Adrenal gland (tissue), 19 donors: ENCODE measurements at regions of chr17 and their contacts with region 1.

Region 1: DNA sequence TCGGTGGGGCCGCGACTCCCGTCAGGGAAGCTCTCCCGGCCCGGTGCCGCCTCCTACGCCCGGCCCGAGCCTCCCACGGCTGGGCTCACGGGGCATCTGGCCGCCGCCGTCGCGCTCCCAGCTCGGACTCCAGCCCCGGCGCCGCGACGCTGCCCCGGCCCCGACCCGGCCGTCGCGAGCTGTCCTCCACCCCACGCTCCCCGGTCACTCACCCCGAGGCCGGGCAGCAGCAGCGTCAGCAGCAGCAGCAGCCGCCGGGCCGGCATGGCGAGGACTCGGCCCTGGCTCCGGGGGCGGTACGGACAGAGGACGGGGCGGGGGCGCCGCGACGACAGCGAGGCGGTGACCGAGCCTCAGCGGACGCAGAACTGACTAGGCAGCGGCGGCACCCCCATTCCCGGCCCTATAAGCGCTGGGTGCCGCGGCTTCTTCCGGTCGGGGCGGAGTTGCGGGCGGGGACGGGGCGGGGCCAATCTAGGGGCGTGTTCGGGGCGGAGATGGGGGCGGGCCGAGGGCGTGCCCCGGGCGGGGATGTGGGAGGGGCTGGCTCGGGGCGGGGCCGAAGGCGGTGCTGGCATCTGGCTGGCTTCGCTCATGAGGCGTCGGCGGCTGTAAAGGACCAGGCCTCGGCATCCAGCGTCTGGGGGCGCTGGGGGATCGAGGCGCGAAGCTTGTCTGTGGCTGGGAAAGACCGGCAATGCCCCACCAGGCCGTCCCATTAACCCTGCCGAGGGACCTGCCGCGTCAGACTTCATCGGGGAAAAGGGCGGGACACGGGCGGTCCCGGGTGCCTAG is at the start of gene ERN1:
- DNase-seq: peak; percentile 94 to 97 (median 96)
- H3K4me3 ChIP-seq: peak within 1 kb of the TSS; percentile 43 to 97 (median 74)
- H3K27ac ChIP-seq: peak within 1 kb of the TSS; percentile 79 to 98 (median 91)
- H3K4me1 ChIP-seq: peaks cover 38 to 59% of the 10 kb centered on the region in 2 donors
- H3K27me3 ChIP-seq: no peaks in the 10 kb centered on the region
- CTCF ChIP-seq: no peak
- POLR2A ChIP-seq: peak; percentile 92 to 99
- total RNA-seq, gene ERN1: 40.4 to 205 (median 111) TPM

Region 2: DNA sequence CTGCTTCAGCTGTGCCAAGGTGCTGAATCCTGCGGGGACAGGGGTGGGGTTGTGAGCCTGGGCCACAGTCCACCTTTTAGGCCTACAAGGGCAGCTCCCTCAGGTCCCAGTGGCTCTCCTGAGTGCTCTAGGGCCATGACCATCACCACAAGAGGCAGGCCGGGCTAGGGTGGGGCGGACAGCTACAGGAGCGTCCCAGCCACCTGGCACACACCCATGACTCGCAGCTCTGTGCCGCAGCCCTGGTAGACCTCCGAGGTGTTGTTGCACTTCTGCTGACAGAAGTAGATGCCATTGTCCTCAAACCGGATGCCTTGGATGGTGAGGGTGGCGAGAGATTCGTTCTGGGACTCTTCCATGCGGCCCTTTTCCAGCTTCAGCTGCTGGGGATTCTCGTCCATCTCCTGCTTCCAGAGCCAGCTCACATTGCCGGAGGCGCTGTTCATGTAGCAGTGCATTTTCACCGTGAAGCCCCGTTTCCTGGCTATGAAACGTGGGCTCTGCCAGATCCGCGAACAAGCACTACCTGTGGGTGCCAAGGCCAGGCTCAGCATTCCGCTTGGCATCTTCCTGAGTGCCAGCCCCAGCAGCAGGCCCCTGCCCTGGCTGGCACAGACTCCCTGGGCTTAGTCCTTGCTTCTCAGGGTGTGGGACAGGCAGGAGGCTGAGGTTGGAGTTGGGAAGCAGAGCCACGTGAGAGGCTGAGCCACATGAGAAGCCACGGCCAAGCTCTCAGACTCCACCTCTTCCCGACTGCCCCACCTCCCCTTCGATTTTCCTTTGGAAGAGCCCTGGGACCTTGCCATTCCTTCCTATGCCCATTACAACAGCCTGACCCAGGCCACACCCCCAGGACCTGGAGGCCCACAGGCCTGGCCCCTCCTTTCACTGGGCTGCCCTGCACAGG is 199.8 kb before region 1 on chr17:
- intact Hi-C with region 1: loop called in 1 of 2 experiments (anchors 10 kb)
- DNase-seq: peak in 1 of 7 donors; percentile 27
- H3K4me3 ChIP-seq: no peak overlapping the region
- H3K27ac ChIP-seq: peak overlapping the region in 1 of 5 donors; percentile 66
- H3K4me1 ChIP-seq: no peaks in the 10 kb centered on the region
- H3K27me3 ChIP-seq: no peaks in the 10 kb centered on the region
- CTCF ChIP-seq: no peak
- POLR2A ChIP-seq: no peak

Region 3: DNA sequence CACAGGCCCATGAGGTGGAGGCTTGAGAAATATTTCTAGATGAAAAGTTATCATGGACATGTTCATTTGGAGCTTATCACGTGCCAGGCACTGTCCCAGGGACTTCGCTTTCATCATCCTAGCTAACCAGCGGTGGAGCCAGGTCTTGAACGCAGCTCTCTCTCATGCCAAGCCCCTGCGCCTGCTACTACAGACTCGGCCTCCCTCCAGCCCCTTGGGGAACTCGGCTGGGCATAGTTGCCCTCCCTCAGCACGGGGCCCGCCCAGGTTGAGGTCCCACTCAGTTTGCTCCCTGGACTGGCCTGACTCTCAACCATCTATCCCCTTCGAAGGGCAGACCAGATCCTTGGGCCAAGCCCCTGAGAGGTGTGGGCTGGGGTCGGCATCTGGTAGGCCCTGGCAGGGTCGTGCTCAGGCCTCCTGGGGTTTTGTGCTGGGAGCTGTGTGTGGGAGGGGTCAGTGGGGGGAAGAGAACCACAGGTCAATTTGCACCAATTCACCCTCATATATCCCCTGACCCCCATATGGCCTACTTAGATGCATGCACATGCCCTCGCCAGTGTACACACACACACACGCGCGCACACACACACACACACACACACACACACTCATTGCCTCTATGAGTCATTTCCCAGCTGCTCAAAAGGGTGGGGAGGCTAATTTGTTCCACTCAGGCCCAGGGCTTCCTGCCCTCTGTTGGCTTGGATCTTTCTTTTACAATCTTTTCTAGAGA is 145.1 kb before region 1 on chr17:
- intact Hi-C with region 1: no loop called
- DNase-seq: peak; percentile 72 to 92 (median 78)
- H3K4me3 ChIP-seq: no peak overlapping the region
- H3K27ac ChIP-seq: peak overlapping the region in 2 of 5 donors; percentile 59 to 72
- H3K4me1 ChIP-seq: peaks cover 5 to 23% of the 10 kb centered on the region in 2 donors
- H3K27me3 ChIP-seq: no peaks in the 10 kb centered on the region
- CTCF ChIP-seq: no peak
- POLR2A ChIP-seq: no peak

Region 4: DNA sequence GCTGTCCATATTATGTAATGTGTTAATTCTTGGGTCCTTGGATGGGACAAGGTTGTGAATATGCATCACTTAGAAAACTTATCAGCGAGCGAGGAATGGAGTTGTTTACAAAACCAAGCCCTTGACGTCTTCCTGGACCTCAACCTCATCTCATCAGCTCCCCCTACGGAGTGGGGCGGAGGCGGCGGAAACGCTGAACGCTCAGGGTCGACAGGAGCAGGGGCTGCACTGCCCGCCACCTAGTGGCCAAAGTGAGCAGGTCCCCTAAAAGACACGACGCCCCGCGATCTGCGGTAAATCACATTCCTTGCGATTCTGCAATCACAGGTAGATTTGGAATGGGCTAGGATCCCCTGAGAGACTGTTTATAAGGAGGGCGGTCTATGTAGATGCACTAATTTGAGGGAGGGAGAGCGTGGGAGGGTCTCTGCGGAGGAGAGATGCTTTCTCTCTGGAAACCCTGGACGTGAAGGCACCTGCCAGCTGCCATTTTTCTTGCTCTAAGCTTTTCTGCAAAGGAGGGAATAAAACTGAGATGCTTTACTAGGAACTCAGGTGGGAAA is 104.1 kb before region 1 on chr17:
- intact Hi-C with region 1: loop called (anchors 5 to 10 kb)
- DNase-seq: peak; percentile 76 to 88 (median 87)
- H3K4me3 ChIP-seq: peak overlapping the region in 1 of 4 donors; percentile 35
- H3K27ac ChIP-seq: peak overlapping the region in 3 of 5 donors; percentile 28 to 56 (median 39)
- H3K4me1 ChIP-seq: peaks cover 0 to 10% of the 10 kb centered on the region in 2 donors
- H3K27me3 ChIP-seq: no peaks in the 10 kb centered on the region
- CTCF ChIP-seq: peak; percentile 88 to 97 (median 93)
- POLR2A ChIP-seq: no peak

Region 5: DNA sequence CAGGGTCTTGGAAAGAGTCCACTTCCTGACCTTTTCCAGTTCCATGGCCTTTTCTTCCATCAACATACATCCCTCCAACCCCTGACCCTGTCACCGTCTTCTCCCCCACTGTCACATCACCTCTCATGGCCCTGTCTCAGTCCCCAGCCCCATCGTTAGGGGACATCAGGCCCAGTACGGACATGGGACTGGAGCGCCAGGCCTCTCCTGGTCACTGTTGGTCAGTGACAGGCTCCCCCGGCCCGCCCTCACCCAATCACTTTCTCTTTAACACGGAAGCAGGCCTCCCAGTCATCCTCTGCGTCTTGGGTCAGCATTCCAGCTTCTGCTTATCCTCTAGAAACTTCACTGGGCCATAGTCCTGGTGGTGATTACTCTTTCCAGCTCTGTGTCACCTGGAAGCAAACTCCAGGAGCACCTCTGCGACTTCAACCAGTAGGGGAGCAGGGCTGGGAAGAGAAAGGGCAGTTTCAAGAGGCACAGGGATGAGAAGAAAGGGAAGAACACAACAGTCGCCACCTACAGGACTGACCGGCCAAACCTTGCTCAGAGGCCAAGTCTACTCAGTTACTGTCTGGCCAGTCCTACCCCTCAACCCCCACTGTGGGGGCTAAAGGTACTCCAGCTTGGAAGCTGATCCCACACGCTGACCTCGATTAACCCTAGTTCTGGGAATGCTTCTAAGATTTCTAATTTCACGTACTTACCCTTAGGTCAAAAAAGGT is 93.6 kb before region 1 on chr17:
- intact Hi-C with region 1: loop called in 1 of 2 experiments (anchors 10 kb)
- DNase-seq: peak in 1 of 7 donors; percentile 46
- H3K4me3 ChIP-seq: no peak overlapping the region
- H3K27ac ChIP-seq: no peak overlapping the region
- H3K4me1 ChIP-seq: no peaks in the 10 kb centered on the region
- H3K27me3 ChIP-seq: no peaks in the 10 kb centered on the region
- CTCF ChIP-seq: no peak
- POLR2A ChIP-seq: no peak

Region 6: GRCh38 chr17:64063766-64064224 is 66.2 kb before region 1 on chr17:
- intact Hi-C with region 1: loop called in 1 of 2 experiments (anchors 10 kb)
- DNase-seq: peak; percentile 58 to 85 (median 73)
- H3K4me3 ChIP-seq: no peak overlapping the region
- H3K27ac ChIP-seq: peak overlapping the region in 4 of 5 donors; percentile 35 to 75 (median 62)
- H3K4me1 ChIP-seq: peaks cover 8 to 47% of the 10 kb centered on the region in 2 donors
- H3K27me3 ChIP-seq: no peaks in the 10 kb centered on the region
- CTCF ChIP-seq: peak; percentile 23 to 67 (median 54)
- POLR2A ChIP-seq: peak in 1 of 2 donors; percentile 5

Region 7: GRCh38 chr17:64160378-64160777 is 30.4 kb after region 1 on chr17:
- intact Hi-C with region 1: no loop called
- DNase-seq: peak in 2 of 7 donors; percentile 9 to 33
- H3K4me3 ChIP-seq: no peak overlapping the region
- H3K27ac ChIP-seq: no peak overlapping the region
- H3K4me1 ChIP-seq: peaks cover 15 to 17% of the 10 kb centered on the region in 2 donors
- H3K27me3 ChIP-seq: no peaks in the 10 kb centered on the region
- CTCF ChIP-seq: no peak
- POLR2A ChIP-seq: no peak